ENCODE measurements at regions of chr12 and their contacts with region 1.

Region 1: DNA sequence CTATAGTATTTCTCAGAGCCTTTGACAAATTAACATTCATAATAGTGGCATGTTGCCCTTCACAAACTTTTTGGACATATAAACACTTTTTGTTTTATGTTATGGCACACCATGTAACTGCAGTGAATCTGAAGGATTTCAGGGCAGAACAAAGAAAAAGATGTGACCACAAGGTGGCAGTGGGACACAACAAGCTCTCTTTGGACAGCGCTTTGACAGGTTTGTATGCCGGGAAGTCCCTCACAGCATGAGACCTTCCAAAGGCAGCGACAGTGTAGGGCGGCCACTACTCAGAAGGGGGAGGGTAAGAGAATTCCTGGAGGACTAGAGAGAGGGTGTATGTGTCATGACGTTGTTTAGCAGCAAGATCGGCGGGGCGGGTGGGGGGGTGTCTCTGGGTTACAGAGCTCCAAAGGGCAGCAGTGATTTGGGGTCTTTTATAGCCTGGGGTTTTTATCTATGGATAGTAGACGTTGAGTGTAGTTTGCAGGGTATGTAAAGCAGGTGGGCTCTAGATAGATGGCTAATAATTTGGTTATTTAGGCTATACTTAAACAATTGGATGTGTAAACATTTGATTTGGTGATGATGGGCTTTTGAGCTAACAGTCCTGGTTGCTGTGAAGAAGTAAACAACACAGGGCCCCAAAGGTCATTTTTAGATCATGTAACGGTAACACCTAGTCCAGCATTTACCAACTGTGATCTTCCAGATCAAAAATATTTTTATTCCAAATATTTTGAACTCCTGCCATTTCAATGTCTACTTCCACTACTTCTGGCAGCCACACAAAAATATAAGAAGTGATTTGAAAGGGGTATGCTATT is 22.9 kb downstream of the ETFBKMT start:
- DNase-seq: peak; percentile 88
- H3K4me3 Mint-ChIP-seq: no peak overlapping the region
- H3K27ac Mint-ChIP-seq: no peak overlapping the region
- H3K4me1 Mint-ChIP-seq: no peaks in the 10 kb centered on the region
- H3K27me3 Mint-ChIP-seq: no peaks in the 10 kb centered on the region
- CTCF ChIP-seq: peak; percentile 82

Region 2: DNA sequence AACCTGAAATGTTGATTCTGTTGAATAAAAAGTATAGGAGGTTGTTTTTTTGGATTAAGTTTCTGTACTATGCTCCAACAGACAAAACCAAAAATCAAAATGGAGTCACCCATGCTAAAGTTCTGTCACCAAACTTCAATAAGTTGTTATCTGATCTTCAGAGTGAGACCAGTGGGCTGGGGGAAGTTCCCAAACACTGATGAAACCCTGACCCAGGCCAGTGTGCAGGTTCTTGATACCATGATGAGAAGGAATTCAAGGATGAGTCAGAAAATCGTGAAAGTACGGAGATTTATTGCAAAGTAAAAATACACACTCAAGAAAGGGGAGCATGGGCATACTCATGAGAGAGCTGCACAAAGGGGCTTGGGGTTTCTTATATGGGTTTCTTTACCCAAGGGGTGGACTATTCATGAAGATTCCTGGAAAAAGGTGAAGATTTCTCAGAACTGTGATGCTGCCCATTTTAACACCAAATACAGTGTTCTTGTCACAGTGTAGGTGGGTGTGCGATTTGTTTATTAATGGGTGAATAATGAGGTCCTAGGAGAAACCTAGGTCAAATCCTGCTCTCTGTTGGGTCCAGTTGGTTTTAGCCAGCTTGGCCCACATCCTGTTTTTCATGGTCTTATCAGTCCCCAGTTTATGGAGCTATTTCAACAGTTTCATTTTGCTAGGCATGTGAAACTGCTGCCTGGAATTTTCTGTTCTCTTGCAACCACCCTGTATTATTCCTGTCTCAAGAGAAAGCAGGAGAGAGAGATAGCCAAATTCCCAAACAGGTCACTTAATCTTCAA is 63.9 kb before region 1 on chr12:
- CTCF ChIA-PET with region 1: no interaction called
- POLR2A ChIA-PET with region 1: no interaction called
- intact Hi-C with region 1: no loop called
- DNase-seq: no peak
- H3K4me3 Mint-ChIP-seq: no peak overlapping the region
- H3K27ac Mint-ChIP-seq: no peak overlapping the region
- H3K4me1 Mint-ChIP-seq: no peaks in the 10 kb centered on the region
- H3K27me3 Mint-ChIP-seq: no peaks in the 10 kb centered on the region
- CTCF ChIP-seq: no peak

Region 3: DNA sequence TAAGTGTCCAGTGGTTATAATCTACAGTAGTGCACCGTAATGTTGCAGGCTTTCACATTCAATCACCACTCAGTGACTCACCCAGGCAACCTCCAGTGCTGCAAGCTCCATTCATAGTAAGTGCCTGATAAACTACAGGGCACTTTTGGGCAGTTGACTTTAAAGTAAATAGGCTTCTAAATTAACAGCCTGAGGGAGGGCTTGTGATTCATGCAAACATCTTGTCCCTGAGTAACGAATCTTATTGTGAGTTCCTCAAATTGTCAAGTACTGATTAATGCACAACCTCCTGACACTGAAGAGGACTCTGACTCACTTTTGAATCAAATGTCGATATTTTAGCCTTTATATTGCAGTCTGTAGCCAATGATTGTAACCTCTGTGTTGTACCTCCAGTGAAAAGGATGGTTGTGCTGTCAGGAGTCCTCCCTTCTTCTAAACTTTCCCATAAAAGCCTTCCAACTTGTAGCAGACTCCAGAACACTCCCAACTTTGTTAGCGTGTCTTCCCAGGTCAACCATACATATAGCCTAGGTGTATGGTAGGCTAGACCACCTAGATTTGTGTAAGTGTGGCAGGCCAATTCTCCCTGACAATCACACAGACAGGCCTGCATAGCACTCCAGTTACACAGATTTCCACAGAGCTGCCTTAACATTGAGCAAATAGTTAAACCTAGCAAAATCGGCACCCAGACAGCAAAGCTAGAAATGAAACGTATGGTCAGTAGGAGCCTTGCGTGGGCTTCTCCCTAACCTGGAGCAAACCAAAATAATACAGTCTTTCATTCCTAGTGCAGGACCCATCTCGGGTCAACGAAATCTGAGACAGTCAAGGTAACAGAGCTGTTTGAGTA is 369.4 kb after region 1 on chr12:
- CTCF ChIA-PET with region 1: interaction called, 10 read pairs
- POLR2A ChIA-PET with region 1: no interaction called
- intact Hi-C with region 1: no loop called
- DNase-seq: peak; percentile 92
- H3K4me3 Mint-ChIP-seq: no peak overlapping the region
- H3K27ac Mint-ChIP-seq: peak overlapping the region; percentile 47
- H3K4me1 Mint-ChIP-seq: peaks cover 7% of the 10 kb centered on the region
- H3K27me3 Mint-ChIP-seq: no peaks in the 10 kb centered on the region
- CTCF ChIP-seq: no peak

Region 4: DNA sequence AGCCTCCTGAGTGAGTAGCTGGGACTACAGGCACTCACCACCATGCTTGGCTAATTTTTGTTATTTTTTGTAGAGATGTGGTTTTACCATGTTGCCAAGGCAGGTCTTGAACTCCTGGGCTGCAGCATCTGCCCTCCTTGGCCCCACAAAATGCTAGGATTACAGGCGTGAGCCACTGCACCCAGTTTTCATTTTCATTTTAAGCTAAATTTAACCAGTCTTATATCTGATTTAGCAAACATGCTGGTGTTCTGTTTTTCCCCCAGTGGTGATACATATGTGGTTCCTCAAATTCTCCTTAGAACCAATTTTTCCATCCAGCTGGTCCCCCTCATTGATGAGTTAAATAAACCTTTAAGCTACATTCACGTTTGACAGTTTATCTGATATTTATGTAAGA is 380.5 kb after region 1 on chr12:
- CTCF ChIA-PET with region 1: interaction called, 9 read pairs
- POLR2A ChIA-PET with region 1: interaction called, 3 read pairs
- intact Hi-C with region 1: loop called (anchors 1 kb)
- DNase-seq: no peak
- H3K4me3 Mint-ChIP-seq: no peak overlapping the region
- H3K27ac Mint-ChIP-seq: no peak overlapping the region
- H3K4me1 Mint-ChIP-seq: no peaks in the 10 kb centered on the region
- H3K27me3 Mint-ChIP-seq: no peaks in the 10 kb centered on the region
- CTCF ChIP-seq: no peak

Region 5: GRCh38 chr12:32302218-32303173 is 620.1 kb after region 1 on chr12:
- CTCF ChIA-PET with region 1: interaction called, 4 read pairs
- POLR2A ChIA-PET with region 1: no interaction called
- intact Hi-C with region 1: loop called (anchors 2 kb)
- DNase-seq: peak; percentile 29
- H3K4me3 Mint-ChIP-seq: no peak overlapping the region
- H3K27ac Mint-ChIP-seq: no peak overlapping the region
- H3K4me1 Mint-ChIP-seq: no peaks in the 10 kb centered on the region
- H3K27me3 Mint-ChIP-seq: no peaks in the 10 kb centered on the region
- CTCF ChIP-seq: peak; percentile 28